CD8-positive, alpha-beta T cell (primary cell): ENCODE measurements at regions of chrX and their contacts with region 1.

Region 1: GRCh38 chrX:13094828-13095341 is 50.5 kb upstream of the FAM9C start:
- DNase-seq: no peak
- ATAC-seq: no peak
- H3K4me3 ChIP-seq: no peak overlapping the region
- H3K4me3 Mint-ChIP-seq: peak overlapping the region; percentile 57
- H3K27ac ChIP-seq: peak overlapping the region in 1 of 2 experiments; percentile 96
- H3K27ac Mint-ChIP-seq: peak overlapping the region; percentile 95
- H3K4me1 ChIP-seq: peaks cover 70% of the 10 kb centered on the region
- H3K4me1 Mint-ChIP-seq: peaks cover 78% of the 10 kb centered on the region
- H3K27me3 ChIP-seq: no peaks in the 10 kb centered on the region
- H3K27me3 Mint-ChIP-seq: no peaks in the 10 kb centered on the region
- CTCF ChIP-seq: no peak

Region 2: DNA sequence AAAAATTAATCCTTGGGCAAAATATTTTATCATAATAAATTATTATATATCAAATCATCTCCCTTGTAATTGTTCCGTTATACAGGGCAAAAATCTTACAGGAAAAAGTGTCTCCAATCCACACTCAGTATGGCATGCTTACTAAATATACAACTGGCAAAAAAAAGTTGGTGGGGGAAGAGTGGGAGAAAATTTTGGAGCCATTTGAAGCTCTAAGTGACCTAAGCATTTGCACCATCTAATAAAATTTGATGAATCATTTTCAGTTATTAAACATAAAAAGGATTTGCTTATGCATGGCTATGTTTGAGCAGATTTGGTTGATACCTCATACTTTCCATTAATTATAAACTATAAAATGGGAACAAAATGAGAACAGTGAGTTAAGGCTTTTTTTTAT is 17.6 kb after region 1 on chrX:
- CTCF ChIA-PET with region 1: no interaction called
- POLR2A ChIA-PET with region 1: no interaction called
- intact Hi-C with region 1: no loop called
- DNase-seq: no peak
- ATAC-seq: no peak
- H3K4me3 ChIP-seq: no peak overlapping the region
- H3K4me3 Mint-ChIP-seq: no peak overlapping the region
- H3K27ac ChIP-seq: no peak overlapping the region
- H3K27ac Mint-ChIP-seq: no peak overlapping the region
- H3K4me1 ChIP-seq: no peaks in the 10 kb centered on the region
- H3K4me1 Mint-ChIP-seq: no peaks in the 10 kb centered on the region
- H3K27me3 ChIP-seq: no peaks in the 10 kb centered on the region
- H3K27me3 Mint-ChIP-seq: no peaks in the 10 kb centered on the region
- CTCF ChIP-seq: no peak

Region 3: DNA sequence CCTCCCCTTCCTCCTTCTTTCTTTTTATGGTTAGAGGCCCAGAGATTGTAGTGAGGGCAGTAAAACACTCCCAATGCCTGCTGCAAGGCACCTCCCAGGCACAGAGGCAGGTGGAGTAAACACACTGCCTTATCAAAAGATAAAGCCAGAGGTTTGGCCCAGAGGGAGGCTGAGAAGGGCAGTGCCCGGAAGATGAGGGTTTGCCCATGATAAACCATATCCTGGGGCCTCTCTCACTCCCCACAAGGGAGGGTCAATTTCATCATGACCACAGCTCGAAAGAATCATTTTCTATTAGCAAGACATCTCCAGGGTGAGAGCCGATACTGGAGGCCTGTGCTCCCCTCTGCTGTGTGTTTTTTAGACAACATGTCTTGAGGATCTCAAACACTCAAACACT is 48.0 kb after region 1 on chrX:
- CTCF ChIA-PET with region 1: no interaction called
- POLR2A ChIA-PET with region 1: no interaction called
- intact Hi-C with region 1: loop called in 1 of 2 experiments (anchors 5 kb)
- DNase-seq: peak in 1 of 9 experiments; percentile 7
- ATAC-seq: no peak
- H3K4me3 ChIP-seq: no peak overlapping the region
- H3K4me3 Mint-ChIP-seq: no peak overlapping the region
- H3K27ac ChIP-seq: no peak overlapping the region
- H3K27ac Mint-ChIP-seq: no peak overlapping the region
- H3K4me1 ChIP-seq: no peaks in the 10 kb centered on the region
- H3K4me1 Mint-ChIP-seq: peaks cover 10% of the 10 kb centered on the region
- H3K27me3 ChIP-seq: no peaks in the 10 kb centered on the region
- H3K27me3 Mint-ChIP-seq: no peaks in the 10 kb centered on the region
- CTCF ChIP-seq: no peak